Dendritic cell treated with granulocyte-macrophage colony-stimulating factor and Interleukin-4, amounts not matched to agents 40 ng/mL and 50 ng/mL, for 4 days (primary cell): ENCODE measurements at regions of chr3 and their contacts with region 1.

Region 1: GRCh38 chr3:152121292-152121654 is 147.5 kb upstream of the MBNL1 start:
- H3K4me3 Mint-ChIP-seq: no peak overlapping the region
- H3K27ac Mint-ChIP-seq: no peak overlapping the region
- H3K4me1 Mint-ChIP-seq: peaks cover 10% of the 10 kb centered on the region
- H3K27me3 Mint-ChIP-seq: no peaks in the 10 kb centered on the region

Region 2: DNA sequence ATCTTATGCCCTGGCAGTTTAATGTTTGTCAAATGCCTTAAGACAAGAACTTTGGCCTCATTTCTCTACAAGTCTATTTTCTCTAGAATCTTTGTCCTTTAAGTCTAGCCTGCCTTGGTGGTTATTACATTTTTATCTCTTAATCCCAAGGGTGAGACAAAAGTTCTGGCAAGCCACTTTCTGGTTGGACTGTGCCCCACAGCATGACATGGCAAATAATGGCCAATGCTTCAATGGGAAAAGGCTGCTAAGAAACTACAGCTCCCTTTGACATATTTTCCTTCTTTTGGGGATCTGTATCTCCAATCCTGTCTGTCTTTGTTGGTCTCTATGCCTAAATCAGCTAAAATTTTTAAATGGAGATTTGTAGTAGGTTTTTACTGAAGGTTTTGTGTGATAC is 34.1 kb before region 1 on chr3:
- intact Hi-C with region 1: loop called (anchors 5 kb)
- H3K4me3 Mint-ChIP-seq: no peak overlapping the region
- H3K27ac Mint-ChIP-seq: no peak overlapping the region
- H3K4me1 Mint-ChIP-seq: no peaks in the 10 kb centered on the region
- H3K27me3 Mint-ChIP-seq: no peaks in the 10 kb centered on the region

Region 3: GRCh38 chr3:152376351-152377183 is 255.3 kb after region 1 on chr3:
- intact Hi-C with region 1: no loop called
- H3K4me3 Mint-ChIP-seq: peak overlapping the region; percentile 30
- H3K27ac Mint-ChIP-seq: peak overlapping the region; percentile 79
- H3K4me1 Mint-ChIP-seq: peaks cover 56% of the 10 kb centered on the region
- H3K27me3 Mint-ChIP-seq: no peaks in the 10 kb centered on the region